Activated CD4-positive, alpha-beta T cell treated with anti-CD3 and anti-CD28 coated beads for 36 hours (primary cell): ENCODE measurements at regions of chr13 and their contacts with region 1.

Region 1: DNA sequence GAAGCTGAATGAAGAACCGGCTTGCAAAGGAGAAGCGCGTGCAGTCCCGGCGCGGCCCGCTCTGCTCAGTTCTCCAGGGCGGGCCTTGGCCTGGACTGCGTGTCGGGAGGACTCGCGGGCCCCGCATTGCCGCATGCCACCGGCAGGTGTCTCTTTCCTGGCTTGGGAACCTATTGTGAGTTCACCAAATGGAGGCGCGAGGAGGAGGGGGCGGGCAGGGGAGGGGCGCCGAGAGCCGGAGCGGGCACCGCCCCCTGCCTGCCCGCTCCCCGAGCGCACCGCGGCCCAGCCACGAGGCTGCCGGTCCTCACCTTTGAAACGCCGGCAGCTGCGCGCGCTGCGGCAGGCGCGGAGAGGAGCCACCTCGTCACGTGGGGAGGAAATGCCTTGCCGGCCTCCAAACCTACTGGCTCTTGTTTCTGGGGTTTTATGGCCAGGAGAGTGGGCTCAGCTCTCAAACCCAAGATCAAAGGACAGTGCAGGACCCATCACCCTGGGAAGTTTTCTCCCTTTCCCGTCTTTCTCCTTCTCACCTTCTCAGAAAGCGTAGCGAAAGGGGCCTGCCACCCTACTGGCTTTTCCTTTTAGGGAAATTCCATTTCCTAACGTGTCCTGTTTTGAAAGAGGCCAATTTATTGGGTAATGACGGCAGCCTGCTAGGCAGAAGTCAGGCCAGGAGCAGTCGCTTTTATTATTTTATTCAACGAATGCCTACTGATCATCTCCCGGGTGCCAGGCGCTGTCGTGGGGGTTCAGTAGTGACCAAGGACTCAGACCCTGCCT is 13.8 kb upstream of the UBE2L5 start:
- DNase-seq: peak; percentile 96
- ATAC-seq: peak; percentile 93
- H3K4me3 Mint-ChIP-seq: peak overlapping the region; percentile 39
- H3K27ac Mint-ChIP-seq: peak overlapping the region; percentile 37
- H3K4me1 Mint-ChIP-seq: peaks cover 20% of the 10 kb centered on the region
- H3K27me3 Mint-ChIP-seq: no peaks in the 10 kb centered on the region

Region 2: GRCh38 chr13:30371649-30372265 is 36.8 kb before region 1 on chr13:
- CTCF ChIA-PET with region 1: interaction called, 6 read pairs
- POLR2A ChIA-PET with region 1: no interaction called
- intact Hi-C with region 1: loop called in 1 of 2 experiments (anchors 5 kb)
- DNase-seq: peak; percentile 81
- ATAC-seq: peak; percentile 67
- H3K4me3 Mint-ChIP-seq: peak overlapping the region; percentile 59
- H3K27ac Mint-ChIP-seq: peak overlapping the region; percentile 69
- H3K4me1 Mint-ChIP-seq: peaks cover 75% of the 10 kb centered on the region
- H3K27me3 Mint-ChIP-seq: no peaks in the 10 kb centered on the region

Region 3: DNA sequence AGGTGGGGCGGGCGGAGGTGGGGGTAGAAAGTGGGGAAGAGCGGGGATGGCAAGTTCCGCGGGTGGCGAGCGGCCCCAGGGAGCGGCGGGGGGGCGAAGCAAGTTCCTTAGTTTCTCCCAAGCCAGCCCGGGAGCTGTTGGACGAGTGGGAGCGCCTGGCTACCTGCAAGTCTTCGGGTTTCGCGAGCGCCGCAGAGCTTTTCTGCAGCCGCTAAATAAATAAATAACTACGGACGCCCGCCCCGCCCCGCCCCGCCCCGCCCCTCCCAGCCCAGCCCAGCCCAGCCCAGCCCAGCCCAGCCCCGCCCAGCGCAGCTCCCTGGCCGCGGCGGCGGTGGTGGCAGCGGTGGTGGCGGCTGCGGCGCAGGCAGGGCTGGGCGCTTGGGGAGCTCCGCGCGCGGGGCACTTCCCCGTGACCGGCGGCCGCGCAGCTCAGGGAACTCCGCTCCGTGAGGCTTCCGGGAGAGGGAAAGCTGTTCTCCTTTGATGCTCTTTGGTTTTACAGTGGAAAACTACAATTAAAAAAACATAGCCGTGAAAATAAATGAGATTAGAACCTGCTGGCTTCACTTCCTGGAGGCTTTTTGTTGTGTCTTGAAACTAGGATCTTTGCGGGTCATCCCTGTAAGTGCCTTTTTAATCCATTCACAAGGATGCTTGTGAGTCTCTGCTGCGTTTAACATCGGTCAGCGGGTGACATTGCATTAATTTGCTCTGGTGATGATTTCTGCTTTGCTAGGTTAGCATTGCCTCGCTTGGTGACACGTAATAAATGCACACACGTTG is 13.7 kb after region 1 on chr13 and contains the start of gene UBE2L5:
- CTCF ChIA-PET with region 1: interaction called, 5 read pairs
- POLR2A ChIA-PET with region 1: no interaction called
- intact Hi-C with region 1: loop called (anchors 1 kb)
- DNase-seq: peak; percentile 85
- ATAC-seq: peak; percentile 96
- H3K4me3 Mint-ChIP-seq: peak within 1 kb of the TSS; percentile 77
- H3K27ac Mint-ChIP-seq: peak within 1 kb of the TSS; percentile 69
- H3K4me1 Mint-ChIP-seq: peaks cover 12% of the 10 kb centered on the region
- H3K27me3 Mint-ChIP-seq: no peaks in the 10 kb centered on the region
- total RNA-seq, gene UBE2L5: 0.11 TPM in 1 of 2 experiments, not detected in the other

Region 4: GRCh38 chr13:30493658-30494381 is 85.3 kb after region 1 on chr13:
- CTCF ChIA-PET with region 1: no interaction called
- POLR2A ChIA-PET with region 1: no interaction called
- intact Hi-C with region 1: no loop called
- DNase-seq: no peak
- ATAC-seq: no peak
- H3K4me3 Mint-ChIP-seq: no peak overlapping the region
- H3K27ac Mint-ChIP-seq: no peak overlapping the region
- H3K4me1 Mint-ChIP-seq: no peaks in the 10 kb centered on the region
- H3K27me3 Mint-ChIP-seq: no peaks in the 10 kb centered on the region

Region 5: GRCh38 chr13:30551189-30551588 is 142.7 kb after region 1 on chr13:
- CTCF ChIA-PET with region 1: no interaction called
- POLR2A ChIA-PET with region 1: no interaction called
- intact Hi-C with region 1: loop called in 1 of 2 experiments (anchors 1 kb)
- DNase-seq: peak; percentile 16
- ATAC-seq: peak; percentile 85
- H3K4me3 Mint-ChIP-seq: no peak overlapping the region
- H3K27ac Mint-ChIP-seq: no peak overlapping the region
- H3K4me1 Mint-ChIP-seq: peaks cover 2% of the 10 kb centered on the region
- H3K27me3 Mint-ChIP-seq: no peaks in the 10 kb centered on the region

Region 6: DNA sequence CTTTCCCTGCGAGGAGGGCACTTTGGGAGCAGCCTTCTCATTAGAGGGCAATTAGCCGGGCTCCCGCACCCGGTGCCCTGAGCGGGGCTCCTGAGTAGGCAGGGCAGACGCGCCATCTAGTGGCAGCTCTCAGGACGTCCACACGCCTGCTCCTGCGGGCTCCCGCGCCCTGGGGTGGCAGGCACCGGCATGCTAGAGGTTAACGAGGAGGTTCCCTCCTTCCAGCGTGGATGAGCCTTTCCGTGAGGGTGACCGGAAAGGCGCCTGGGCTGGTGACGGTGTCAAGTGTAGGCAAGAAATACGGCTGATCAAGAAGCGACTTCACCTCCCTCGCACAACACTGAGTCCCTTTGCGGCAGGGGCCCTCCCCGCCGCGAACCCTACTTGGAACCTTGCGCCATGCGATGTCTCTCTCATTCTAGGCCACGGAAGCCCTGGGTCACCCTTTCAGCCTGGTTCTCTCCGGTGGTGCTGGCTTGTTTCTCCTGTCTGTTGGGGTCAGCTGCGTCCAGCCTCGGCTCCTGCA is 394.5 kb after region 1 on chr13:
- CTCF ChIA-PET with region 1: no interaction called
- POLR2A ChIA-PET with region 1: no interaction called
- intact Hi-C with region 1: loop called in 1 of 2 experiments (anchors 1 kb)
- DNase-seq: peak; percentile 91
- ATAC-seq: peak; percentile 99
- H3K4me3 Mint-ChIP-seq: no peak overlapping the region
- H3K27ac Mint-ChIP-seq: no peak overlapping the region
- H3K4me1 Mint-ChIP-seq: peaks cover 4% of the 10 kb centered on the region
- H3K27me3 Mint-ChIP-seq: no peaks in the 10 kb centered on the region